Esophagus muscularis mucosa (tissue), 4 donors: ENCODE measurements at regions of chr3 and their contacts with region 1.

Region 1: GRCh38 chr3:133578548-133579191 is 5.2 kb downstream of the CDV3 start:
- DNase-seq: no peak
- H3K4me3 ChIP-seq: peak overlapping the region in 1 of 4 donors; percentile 4
- H3K27ac ChIP-seq: no peak overlapping the region
- H3K4me1 ChIP-seq: peaks cover 57 to 88% (median 82%) of the 10 kb centered on the region in 4 donors
- H3K27me3 ChIP-seq: no peaks in the 10 kb centered on the region
- CTCF ChIP-seq: peak; percentile 40 to 56 (median 52)
- EP300 ChIP-seq: no peak
- POLR2A ChIP-seq: no peak

Region 2: GRCh38 chr3:133487920-133488540 is 90.6 kb before region 1 on chr3:
- intact Hi-C with region 1: loop called (anchors 2 kb)
- DNase-seq: peak; percentile 86
- H3K4me3 ChIP-seq: no peak overlapping the region
- H3K27ac ChIP-seq: no peak overlapping the region
- H3K4me1 ChIP-seq: no peaks in the 10 kb centered on the region
- H3K27me3 ChIP-seq: no peaks in the 10 kb centered on the region
- CTCF ChIP-seq: peak; percentile 47 to 63 (median 56)
- EP300 ChIP-seq: no peak
- POLR2A ChIP-seq: no peak

Region 3: GRCh38 chr3:133506215-133506901 is 72.3 kb before region 1 on chr3:
- intact Hi-C with region 1: no loop called
- DNase-seq: peak; percentile 90
- H3K4me3 ChIP-seq: peak overlapping the region in 1 of 4 donors; percentile 1
- H3K27ac ChIP-seq: no peak overlapping the region
- H3K4me1 ChIP-seq: no peaks in the 10 kb centered on the region
- H3K27me3 ChIP-seq: no peaks in the 10 kb centered on the region
- CTCF ChIP-seq: no peak
- EP300 ChIP-seq: no peak
- POLR2A ChIP-seq: no peak